AG04449 (cell line): ENCODE measurements at regions of chr11 and their contacts with region 1.

Region 1: GRCh38 chr11:93767018-93767417 is 17.1 kb upstream of the MED17 start:
- DNase-seq: no peak
- H3K4me3 ChIP-seq: no peak overlapping the region
- CTCF ChIP-seq: no peak

Region 2: DNA sequence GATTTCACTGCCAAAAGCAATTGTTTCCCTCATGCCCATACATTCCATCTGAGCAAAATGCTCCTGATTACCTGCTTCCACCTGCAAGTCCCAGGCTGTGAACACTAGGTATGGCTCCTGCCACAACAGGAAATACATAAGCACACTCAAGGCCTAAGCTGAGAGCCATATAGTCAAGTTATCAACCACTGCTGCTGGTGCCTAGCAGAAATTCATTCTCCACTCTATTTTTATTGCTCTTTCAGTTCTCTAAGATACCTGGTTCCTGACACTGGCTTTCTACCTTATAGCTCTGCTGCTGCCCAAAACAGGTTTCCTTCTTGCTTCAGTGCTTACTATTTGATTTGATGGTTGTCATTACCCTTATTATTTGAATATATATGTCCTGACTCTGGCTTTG is 600.8 kb before region 1 on chr11:
- CTCF ChIA-PET with region 1: no interaction called
- POLR2A ChIA-PET with region 1: no interaction called
- DNase-seq: no peak
- H3K4me3 ChIP-seq: no peak overlapping the region
- CTCF ChIP-seq: no peak

Region 3: GRCh38 chr11:93784152-93784934 is 17.3 kb after region 1 on chr11 and contains the start of gene MED17:
- CTCF ChIA-PET with region 1: interaction called, 12 read pairs
- POLR2A ChIA-PET with region 1: no interaction called
- DNase-seq: peak; percentile 60
- H3K4me3 ChIP-seq: peak within 1 kb of the TSS; percentile 99
- CTCF ChIP-seq: peak; percentile 53

Region 4: GRCh38 chr11:93796441-93797231 is 29.6 kb after region 1 on chr11:
- CTCF ChIA-PET with region 1: no interaction called
- POLR2A ChIA-PET with region 1: no interaction called
- DNase-seq: no peak
- H3K4me3 ChIP-seq: no peak overlapping the region
- CTCF ChIP-seq: no peak

Region 5: DNA sequence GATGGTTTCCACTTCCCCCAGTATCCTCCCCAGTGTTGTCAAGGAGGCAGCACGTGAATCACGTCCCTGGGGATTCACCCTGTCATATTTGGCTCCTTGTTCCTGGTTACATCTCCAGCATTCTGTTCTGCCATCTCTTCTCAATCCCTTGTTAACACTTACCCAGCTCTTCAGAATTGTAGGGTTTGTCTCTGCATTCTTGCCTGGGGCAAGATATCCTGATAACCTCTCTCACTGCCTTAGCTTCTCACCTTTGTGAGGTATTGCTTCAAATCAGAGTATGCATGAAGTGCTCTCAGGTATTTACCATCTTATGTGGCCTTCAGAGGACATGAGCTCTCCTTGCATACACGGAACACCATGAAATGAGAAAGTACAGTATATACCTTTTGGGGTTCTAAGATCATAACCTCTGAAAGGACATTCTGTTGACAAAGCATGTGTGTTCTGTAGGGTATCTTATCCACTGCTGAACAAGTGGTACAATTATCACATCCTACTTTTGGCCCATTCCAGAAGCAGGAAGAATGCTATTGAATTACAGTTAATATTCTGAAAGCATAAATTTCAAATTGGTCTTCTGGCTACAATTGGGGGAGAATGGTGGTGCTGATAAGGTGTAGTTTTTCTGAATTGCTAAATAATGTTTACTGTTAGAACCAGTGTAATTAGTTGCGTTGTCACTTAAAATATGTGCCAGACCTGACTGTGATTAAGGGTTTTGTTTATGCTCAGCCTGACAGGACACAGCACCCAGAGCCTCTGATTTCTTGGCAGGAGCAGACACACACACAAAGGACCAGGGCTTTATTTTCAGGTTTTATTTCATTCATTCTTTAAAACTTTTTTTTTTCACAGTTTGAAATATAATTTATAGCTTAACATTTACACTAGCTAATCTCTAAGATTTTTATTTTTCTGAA is 50.7 kb after region 1 on chr11:
- CTCF ChIA-PET with region 1: no interaction called
- POLR2A ChIA-PET with region 1: no interaction called
- DNase-seq: no peak
- H3K4me3 ChIP-seq: no peak overlapping the region
- CTCF ChIP-seq: no peak